MCF 10A (cell line): ENCODE measurements at regions of chr1 and their contacts with region 1.

Region 1: DNA sequence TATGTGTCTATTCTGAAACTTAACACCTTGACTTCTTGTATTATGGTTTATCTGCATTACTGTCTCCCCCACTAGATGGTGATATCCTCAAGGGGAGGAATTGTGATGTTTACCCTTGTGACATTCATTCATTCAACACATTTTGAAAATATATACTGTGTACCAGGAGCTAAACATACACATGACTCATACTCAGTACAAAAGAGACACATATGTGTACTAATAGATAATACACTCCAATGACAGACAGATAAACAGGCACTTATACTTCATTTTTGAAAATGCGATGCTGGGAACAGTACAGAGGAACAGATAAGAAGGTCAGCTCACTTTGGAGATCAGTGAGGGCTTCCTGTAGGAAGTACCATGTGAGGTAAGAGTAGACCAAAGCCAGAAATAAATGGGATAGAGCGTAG is 8.9 kb upstream of the RAB3GAP2 start:
- DNase-seq: peak; percentile 77
- H3K4me3 Mint-ChIP-seq: no peak overlapping the region
- H3K27ac Mint-ChIP-seq: no peak overlapping the region
- H3K4me1 Mint-ChIP-seq: no peaks in the 10 kb centered on the region
- H3K27me3 Mint-ChIP-seq: peaks cover 13% of the 10 kb centered on the region
- CTCF ChIP-seq: peak; percentile 93

Region 2: DNA sequence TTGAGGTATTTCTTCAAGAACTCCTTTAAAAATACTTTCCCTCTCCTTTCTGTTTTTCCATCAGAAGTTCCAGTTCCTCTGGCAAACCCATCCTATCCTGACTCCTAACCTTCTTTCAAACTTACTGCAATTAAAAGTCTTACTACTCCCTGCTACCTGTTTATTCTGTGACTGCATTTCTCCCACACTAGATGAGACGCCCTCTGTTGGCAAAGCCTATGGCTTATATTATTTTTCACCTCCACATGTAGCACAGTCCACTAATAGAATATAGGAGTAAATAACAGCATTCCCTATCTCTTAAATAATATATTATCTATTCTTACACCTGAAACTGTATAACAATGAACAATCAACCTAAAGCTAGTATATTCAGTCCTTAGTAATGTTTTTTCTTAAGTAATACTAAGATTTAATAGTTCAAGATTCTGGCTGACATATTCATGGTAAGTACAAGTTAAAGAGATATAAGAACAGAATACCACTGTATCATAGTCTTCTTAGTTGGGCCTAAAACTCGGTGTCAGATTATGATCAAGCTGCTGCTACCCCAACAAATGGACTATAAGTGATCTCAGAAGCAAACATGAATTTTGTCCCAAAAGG is 63.7 kb before region 1 on chr1:
- CTCF ChIA-PET with region 1: interaction called, 75 read pairs
- POLR2A ChIA-PET with region 1: interaction called, 3 read pairs
- intact Hi-C with region 1: no loop called
- DNase-seq: peak; percentile 55
- H3K4me3 Mint-ChIP-seq: no peak overlapping the region
- H3K27ac Mint-ChIP-seq: no peak overlapping the region
- H3K4me1 Mint-ChIP-seq: peaks cover 25% of the 10 kb centered on the region
- H3K27me3 Mint-ChIP-seq: no peaks in the 10 kb centered on the region
- CTCF ChIP-seq: peak; percentile 52

Region 3: GRCh38 chr1:220300442-220301121 is 19.4 kb after region 1 on chr1:
- CTCF ChIA-PET with region 1: interaction called, 158 read pairs
- POLR2A ChIA-PET with region 1: interaction called, 5 read pairs
- intact Hi-C with region 1: no loop called
- DNase-seq: peak; percentile 91
- H3K4me3 Mint-ChIP-seq: peak overlapping the region; percentile 25
- H3K27ac Mint-ChIP-seq: peak overlapping the region; percentile 85
- H3K4me1 Mint-ChIP-seq: peaks cover 13% of the 10 kb centered on the region
- H3K27me3 Mint-ChIP-seq: no peaks in the 10 kb centered on the region
- CTCF ChIP-seq: no peak

Region 4: GRCh38 chr1:220552672-220553260 is 271.6 kb after region 1 on chr1:
- CTCF ChIA-PET with region 1: interaction called, 19 read pairs
- POLR2A ChIA-PET with region 1: interaction called, 4 read pairs
- intact Hi-C with region 1: no loop called
- DNase-seq: peak; percentile 55
- H3K4me3 Mint-ChIP-seq: no peak overlapping the region
- H3K27ac Mint-ChIP-seq: no peak overlapping the region
- H3K4me1 Mint-ChIP-seq: peaks cover 6% of the 10 kb centered on the region
- H3K27me3 Mint-ChIP-seq: no peaks in the 10 kb centered on the region
- CTCF ChIP-seq: no peak

Region 5: DNA sequence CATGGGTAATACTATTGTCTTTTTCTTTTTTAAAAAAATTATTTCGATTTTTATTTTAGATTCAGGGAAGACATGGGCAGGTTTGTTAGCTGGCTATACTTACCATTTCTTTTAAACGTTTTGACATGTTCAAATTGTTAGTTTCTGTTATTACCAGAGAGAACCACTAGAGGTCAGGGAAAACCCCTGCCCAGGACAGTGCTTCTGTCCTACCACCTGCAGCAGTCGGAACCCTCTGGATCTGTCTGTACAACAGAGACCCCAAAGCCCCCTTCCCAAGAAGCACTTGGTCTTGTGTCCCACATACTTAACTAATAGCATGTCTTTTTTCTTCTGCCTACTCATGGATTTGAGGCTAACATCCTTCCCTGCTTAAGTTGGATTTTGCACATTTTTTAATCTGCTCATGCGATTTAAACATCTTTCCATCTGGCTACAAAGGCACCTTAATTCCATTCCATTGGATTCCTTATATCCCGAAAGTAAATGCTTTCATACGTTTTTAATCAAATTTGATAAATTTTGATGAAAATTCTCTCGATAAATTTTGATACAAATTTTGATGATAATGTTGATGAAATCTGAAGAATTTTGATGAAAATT is 399.0 kb after region 1 on chr1:
- CTCF ChIA-PET with region 1: interaction called, 22 read pairs
- POLR2A ChIA-PET with region 1: no interaction called
- intact Hi-C with region 1: loop called (anchors 1 kb)
- DNase-seq: peak; percentile 75
- H3K4me3 Mint-ChIP-seq: no peak overlapping the region
- H3K27ac Mint-ChIP-seq: no peak overlapping the region
- H3K4me1 Mint-ChIP-seq: peaks cover 7% of the 10 kb centered on the region
- H3K27me3 Mint-ChIP-seq: no peaks in the 10 kb centered on the region
- CTCF ChIP-seq: peak; percentile 95

Region 6: DNA sequence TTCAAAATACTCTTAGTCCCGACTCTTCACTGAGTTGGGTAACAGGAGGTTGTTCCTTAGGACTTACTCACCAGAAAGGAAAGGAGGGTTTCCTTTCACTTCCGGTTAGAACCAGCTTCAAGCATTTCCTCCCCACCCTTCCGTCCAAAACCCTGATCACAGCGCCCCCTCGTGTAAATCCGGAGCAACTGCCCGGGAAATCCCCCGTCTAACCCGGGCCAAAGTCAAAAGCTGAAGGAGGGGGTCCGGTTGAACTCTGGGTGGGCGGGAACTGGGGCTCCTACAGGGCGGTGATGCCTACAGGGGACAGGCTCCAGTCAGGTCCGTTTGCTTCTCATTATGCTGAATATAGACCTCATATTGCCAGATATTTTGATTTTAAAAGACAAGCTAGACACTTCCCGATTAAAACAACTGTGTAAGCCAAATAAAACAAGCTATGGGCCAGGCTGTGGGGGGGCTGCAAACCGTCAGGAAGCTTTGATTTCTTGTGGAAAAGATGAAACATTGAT is 452.0 kb after region 1 on chr1:
- CTCF ChIA-PET with region 1: interaction called, 124 read pairs
- POLR2A ChIA-PET with region 1: interaction called, 10 read pairs
- intact Hi-C with region 1: loop called (anchors 1 kb)
- DNase-seq: peak; percentile 98
- H3K4me3 Mint-ChIP-seq: peak overlapping the region; percentile 19
- H3K27ac Mint-ChIP-seq: peak overlapping the region; percentile 44
- H3K4me1 Mint-ChIP-seq: peaks cover 32% of the 10 kb centered on the region
- H3K27me3 Mint-ChIP-seq: no peaks in the 10 kb centered on the region
- CTCF ChIP-seq: peak; percentile 99

Region 7: DNA sequence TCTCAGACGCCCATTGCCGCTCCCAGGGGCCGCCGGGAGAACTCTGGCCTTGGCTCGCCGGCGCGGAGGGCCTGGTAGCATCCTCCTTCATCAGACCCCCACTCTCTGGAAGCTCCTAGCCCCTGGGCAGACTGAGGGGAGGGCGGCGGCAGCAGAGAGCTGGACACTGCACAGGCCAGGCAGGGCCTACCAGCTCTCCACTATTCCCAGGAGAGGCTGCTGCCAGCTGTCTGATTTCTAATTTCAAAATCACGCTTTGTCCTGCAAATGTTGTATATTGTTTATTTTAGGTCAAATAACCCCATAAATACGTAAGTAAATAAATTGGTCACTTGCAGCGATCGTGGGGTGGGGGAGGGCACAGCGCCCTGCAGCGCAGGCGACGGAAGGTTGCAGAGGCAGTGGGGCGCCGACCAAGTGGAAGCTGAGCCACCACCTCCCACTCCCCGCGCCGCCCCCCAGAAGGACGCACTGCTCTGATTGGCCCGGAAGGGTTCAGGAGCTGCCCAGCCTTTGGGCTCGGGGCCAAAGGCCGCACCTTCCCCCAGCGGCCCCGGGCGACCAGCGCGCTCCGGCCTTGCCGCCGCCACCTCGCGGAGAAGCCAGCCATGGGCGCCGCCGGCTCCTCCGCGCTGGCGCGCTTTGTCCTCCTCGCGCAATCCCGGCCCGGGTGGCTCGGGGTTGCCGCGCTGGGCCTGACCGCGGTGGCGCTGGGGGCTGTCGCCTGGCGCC is 505.3 kb after region 1 on chr1 and contains the start of gene MTARC1:
- CTCF ChIA-PET with region 1: interaction called, 27 read pairs
- POLR2A ChIA-PET with region 1: no interaction called
- intact Hi-C with region 1: no loop called
- DNase-seq: peak; percentile 76
- H3K4me3 Mint-ChIP-seq: peak within 1 kb of the TSS; percentile 61
- H3K27ac Mint-ChIP-seq: no peak within 1 kb of the TSS
- H3K4me1 Mint-ChIP-seq: peaks cover 17% of the 10 kb centered on the region
- H3K27me3 Mint-ChIP-seq: no peaks in the 10 kb centered on the region
- CTCF ChIP-seq: peak; percentile 22
- total RNA-seq, gene MTARC1: 0.96 and 1.5 TPM in 2 replicates